Sciatic nerve (tissue), 2 donors: ENCODE measurements at regions of chr1 and their contacts with region 1.

Region 1: GRCh38 chr1:180065811-180066549 is 88.7 kb upstream of the QSOX1 start:
- DNase-seq: no peak
- ATAC-seq: no peak

Region 2: GRCh38 chr1:179016747-179017549 is 1049.0 kb before region 1 on chr1:
- intact Hi-C with region 1: loop called (anchors 5 kb)
- DNase-seq: peak; percentile 93
- ATAC-seq: peak; percentile 93

Region 3: GRCh38 chr1:180101411-180101810 is 35.4 kb after region 1 on chr1:
- intact Hi-C with region 1: no loop called
- DNase-seq: no peak
- ATAC-seq: no peak

Region 4: GRCh38 chr1:180116964-180117763 is 51.2 kb after region 1 on chr1:
- intact Hi-C with region 1: no loop called
- DNase-seq: no peak
- ATAC-seq: no peak